ENCODE measurements at regions of chr11 and their contacts with region 1.

Region 1: GRCh38 chr11:95545116-95545875 is 244.3 kb downstream of the FAM76B start:
- DNase-seq: no peak
- CTCF ChIP-seq: peak; percentile 17

Region 2: DNA sequence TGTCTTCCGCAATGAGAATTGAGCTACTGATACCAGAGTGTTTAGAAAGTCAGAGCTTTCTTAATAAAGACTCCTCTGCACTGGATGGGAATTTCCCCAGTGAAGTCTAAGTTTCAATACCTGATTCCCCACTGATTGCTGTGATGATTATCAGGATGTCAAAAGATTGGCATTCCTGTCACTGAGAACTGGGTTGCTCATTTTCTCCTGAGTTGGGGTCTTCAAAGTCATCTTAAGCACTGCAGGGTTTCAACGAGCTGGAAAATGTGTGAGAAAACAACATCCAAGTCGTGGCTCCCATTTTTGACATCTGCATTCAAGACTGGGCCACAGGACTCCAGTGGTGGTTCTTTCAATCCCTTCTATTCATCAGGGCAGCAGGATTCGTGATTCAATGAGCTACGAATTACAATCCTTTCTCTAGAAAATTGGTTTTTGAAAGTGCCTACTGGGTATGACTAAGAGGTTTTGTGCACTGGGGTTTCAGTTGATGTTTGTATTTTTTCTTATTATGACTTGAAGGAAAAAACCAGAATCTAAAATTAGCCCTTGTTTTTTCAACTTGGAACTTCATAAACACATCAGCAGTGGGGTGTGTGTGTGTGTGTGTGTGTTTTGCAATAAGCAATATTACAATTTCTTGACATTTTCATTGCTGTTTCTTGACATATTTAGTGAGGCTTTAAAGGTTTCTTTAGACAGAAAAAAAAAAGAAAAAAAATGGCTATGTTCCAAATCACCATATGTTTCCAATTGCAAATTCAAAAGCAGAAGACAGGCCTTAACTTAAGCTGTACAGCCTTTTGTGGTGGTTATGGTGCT is 11.3 kb after region 1 on chr11:
- CTCF ChIA-PET with region 1: interaction called, 10 read pairs
- POLR2A ChIA-PET with region 1: no interaction called
- DNase-seq: peak; percentile 26
- CTCF ChIP-seq: no peak